Activated T-helper 2 cell treated with anti-CD3 and anti-CD28 coated beads, Interferon-gamma antibody, Interleukin-2, Interleukin-4, amounts not matched to agents 10 μg/mL and 5 μg/mL and 100 μg/mL, durations not matched to agents 14 hours and 24 hours and 36 hours (primary cell): ENCODE measurements at regions of chr4 and their contacts with region 1.

Region 1: GRCh38 chr4:109815151-109816081 is at the start of gene GAR1:
- DNase-seq: peak; percentile 89
- H3K4me3 Mint-ChIP-seq: peak within 1 kb of the TSS; percentile 100
- H3K27ac Mint-ChIP-seq: peak within 1 kb of the TSS; percentile 98
- H3K4me1 Mint-ChIP-seq: peaks cover 43% of the 10 kb centered on the region
- H3K27me3 Mint-ChIP-seq: no peaks in the 10 kb centered on the region
- total RNA-seq, gene GAR1: 43.6 and 44.8 TPM in 2 replicates

Region 2: GRCh38 chr4:108620101-108620932 is 1195.1 kb before region 1 on chr4 and contains the start of gene RPL34:
- intact Hi-C with region 1: loop called (anchors 5 kb)
- DNase-seq: peak; percentile 95
- H3K4me3 Mint-ChIP-seq: peak within 1 kb of the TSS; percentile 99
- H3K27ac Mint-ChIP-seq: peak within 1 kb of the TSS; percentile 95
- H3K4me1 Mint-ChIP-seq: peaks cover 38% of the 10 kb centered on the region
- H3K27me3 Mint-ChIP-seq: no peaks in the 10 kb centered on the region
- total RNA-seq, gene RPL34: 1,375 and 1,412 TPM in 2 replicates

Region 3: DNA sequence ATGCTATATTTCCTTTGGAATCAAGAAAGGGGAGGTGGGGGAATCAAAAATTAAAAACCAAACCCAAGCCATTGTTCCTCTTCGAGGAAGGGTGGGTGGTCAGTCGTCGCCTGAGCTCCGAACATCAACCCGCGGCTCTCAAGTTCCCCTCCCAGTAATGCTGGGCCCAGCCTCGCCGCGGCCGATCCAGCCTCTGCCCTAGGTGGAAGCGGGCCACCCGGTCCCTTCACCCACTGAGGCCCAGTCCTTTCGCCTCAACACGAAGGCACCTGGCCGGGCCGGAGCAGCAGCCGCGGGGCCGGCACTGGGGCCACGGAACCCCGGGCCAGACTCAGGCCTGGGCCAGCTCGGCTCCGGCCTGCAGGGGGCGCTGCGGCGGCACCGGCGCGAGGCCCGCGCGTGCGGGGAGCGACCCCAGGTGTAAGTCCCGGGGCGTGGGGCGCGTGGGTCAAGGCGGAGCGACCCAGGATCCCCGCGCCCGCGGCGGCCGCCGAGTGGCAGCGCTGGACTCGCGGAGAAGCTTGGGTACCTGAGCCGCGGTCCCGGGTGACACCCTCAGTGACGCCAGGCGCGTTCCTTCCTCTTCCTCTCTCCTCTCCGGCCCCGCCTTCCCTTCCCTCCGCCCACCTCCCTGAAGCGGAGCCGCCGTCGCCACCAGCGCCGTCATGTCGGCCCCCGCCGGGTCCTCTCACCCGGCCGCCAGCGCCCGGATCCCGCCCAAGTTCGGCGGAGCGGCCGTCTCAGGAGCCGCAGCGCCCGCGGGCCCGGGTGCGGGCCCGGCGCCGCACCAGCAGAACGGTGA is 382.0 kb before region 1 on chr4 and contains the start of gene SEC24B:
- intact Hi-C with region 1: loop called (anchors 1 kb)
- DNase-seq: peak; percentile 86
- H3K4me3 Mint-ChIP-seq: peak within 1 kb of the TSS; percentile 84
- H3K27ac Mint-ChIP-seq: peak within 1 kb of the TSS; percentile 71
- H3K4me1 Mint-ChIP-seq: peaks cover 51% of the 10 kb centered on the region
- H3K27me3 Mint-ChIP-seq: no peaks in the 10 kb centered on the region
- total RNA-seq, gene SEC24B: 32.0 and 32.3 TPM in 2 replicates

Region 4: DNA sequence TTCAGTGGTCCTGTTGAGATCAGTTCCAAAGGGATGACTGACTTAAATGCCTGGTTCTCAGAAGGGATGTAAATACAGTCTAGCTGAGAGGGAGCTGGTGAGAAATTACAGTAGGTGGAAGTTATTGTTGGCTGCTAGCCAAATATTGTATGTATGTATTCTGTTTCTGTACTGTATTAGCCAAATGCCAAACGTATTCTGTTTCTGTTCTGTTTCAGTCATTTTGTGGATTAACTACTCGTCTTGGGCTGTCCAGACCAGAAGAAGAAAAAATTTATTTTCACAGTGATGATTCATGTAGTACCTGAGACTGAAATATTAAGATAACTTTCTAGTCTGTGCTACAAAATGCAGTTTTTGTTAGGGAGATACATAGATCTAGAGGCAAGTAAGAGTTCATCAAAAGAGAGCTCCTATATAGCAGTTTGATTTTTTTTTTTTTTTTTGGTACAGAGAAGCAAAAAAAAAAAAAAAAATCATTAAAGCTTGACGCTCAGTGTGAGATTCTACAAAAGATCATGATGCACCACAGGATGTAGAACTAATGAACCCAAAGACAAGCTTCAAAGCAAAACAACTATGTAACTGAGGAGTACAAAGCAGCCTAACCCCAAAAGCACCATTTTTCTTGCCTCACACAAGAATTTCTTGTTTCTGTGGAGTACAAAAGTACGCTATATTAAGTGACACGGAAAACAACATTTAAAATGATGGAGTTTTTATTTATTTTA is 167.0 kb before region 1 on chr4:
- intact Hi-C with region 1: loop called (anchors 5 kb)
- DNase-seq: no peak
- H3K4me3 Mint-ChIP-seq: peak overlapping the region; percentile 44
- H3K27ac Mint-ChIP-seq: peak overlapping the region; percentile 82
- H3K4me1 Mint-ChIP-seq: peaks cover 27% of the 10 kb centered on the region
- H3K27me3 Mint-ChIP-seq: no peaks in the 10 kb centered on the region

Region 5: GRCh38 chr4:109729718-109730618 is 85.4 kb before region 1 on chr4 and contains the start of gene PLA2G12A:
- intact Hi-C with region 1: loop called (anchors 1 kb)
- DNase-seq: peak; percentile 68
- H3K4me3 Mint-ChIP-seq: peak within 1 kb of the TSS; percentile 82
- H3K27ac Mint-ChIP-seq: no peak within 1 kb of the TSS
- H3K4me1 Mint-ChIP-seq: peaks cover 14% of the 10 kb centered on the region
- H3K27me3 Mint-ChIP-seq: no peaks in the 10 kb centered on the region
- total RNA-seq, gene PLA2G12A: 7.9 and 10.4 TPM in 2 replicates